Common myeloid progenitor, CD34-positive (primary cell): ENCODE measurements at regions of chr19 and their contacts with region 1.

Region 1: GRCh38 chr19:49570138-49570856 is 10.1 kb downstream of the NOSIP start:
- DNase-seq: peak; percentile 90 to 96 (median 91)
- H3K4me3 ChIP-seq: no peak overlapping the region
- H3K27ac ChIP-seq: no peak overlapping the region
- H3K4me1 ChIP-seq: peaks cover 0 to 14% (median 7%) of the 10 kb centered on the region in 4 experiments
- H3K27me3 ChIP-seq: no peaks in the 10 kb centered on the region

Region 2: GRCh38 chr19:49451430-49452181 is 118.7 kb before region 1 on chr19 and contains the start of gene PIH1D1:
- CTCF ChIA-PET with region 1: no interaction called
- POLR2A ChIA-PET with region 1: no interaction called
- DNase-seq: peak; percentile 98 to 99 (median 99)
- H3K4me3 ChIP-seq: peak within 1 kb of the TSS; percentile 71 to 100 (median 89)
- H3K27ac ChIP-seq: peak within 1 kb of the TSS; percentile 96 to 99
- H3K4me1 ChIP-seq: peaks cover 0 to 29% (median 22%) of the 10 kb centered on the region in 4 experiments
- H3K27me3 ChIP-seq: no peaks in the 10 kb centered on the region

Region 3: GRCh38 chr19:49502866-49503581 is 67.3 kb before region 1 on chr19:
- CTCF ChIA-PET with region 1: interaction called, 33 read pairs
- POLR2A ChIA-PET with region 1: no interaction called
- DNase-seq: peak; percentile 65 to 84 (median 76)
- H3K4me3 ChIP-seq: no peak overlapping the region
- H3K27ac ChIP-seq: no peak overlapping the region
- H3K4me1 ChIP-seq: peaks cover 7 to 47% (median 33%) of the 10 kb centered on the region in 4 experiments
- H3K27me3 ChIP-seq: no peaks in the 10 kb centered on the region

Region 4: DNA sequence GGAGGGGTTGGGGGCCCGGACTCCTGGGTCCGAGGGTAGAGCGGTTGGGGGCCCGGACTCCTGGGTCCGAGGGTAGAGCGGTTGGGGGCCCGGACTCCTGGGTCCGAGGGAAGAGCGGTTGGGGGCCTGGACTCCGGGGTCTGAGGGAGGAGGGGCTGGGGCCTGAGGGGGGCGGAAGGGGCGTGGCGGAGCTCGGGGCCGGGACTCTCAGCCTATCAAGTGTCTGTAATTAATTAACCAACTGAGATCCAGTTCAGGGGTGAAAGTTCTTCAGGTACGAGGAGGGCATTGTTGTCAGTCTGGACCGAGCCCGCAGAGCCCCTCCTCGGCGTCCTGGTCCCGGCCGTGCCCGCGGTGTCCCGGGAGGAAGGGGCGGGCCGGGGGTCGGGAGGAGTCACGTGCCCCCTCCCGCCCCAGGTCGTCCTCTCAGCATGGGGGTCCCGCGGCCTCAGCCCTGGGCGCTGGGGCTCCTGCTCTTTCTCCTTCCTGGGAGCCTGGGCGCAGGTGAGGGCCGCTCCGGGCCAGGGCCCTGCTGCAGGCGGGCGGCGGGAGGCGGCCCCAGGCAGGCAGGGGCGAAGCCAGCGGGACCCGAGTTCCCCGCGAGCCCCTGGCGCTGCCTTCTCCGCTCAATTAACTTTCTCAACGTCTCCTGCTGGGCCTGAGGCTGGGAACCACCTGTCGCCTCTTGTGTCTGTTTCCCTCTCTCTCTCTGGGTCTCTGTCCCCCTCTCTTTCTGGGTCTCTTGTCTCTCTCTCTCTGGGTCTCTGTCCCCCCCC is 57.1 kb before region 1 on chr19:
- CTCF ChIA-PET with region 1: interaction called, 26 read pairs
- POLR2A ChIA-PET with region 1: no interaction called
- DNase-seq: peak in 1 of 3 donors; percentile 29
- H3K4me3 ChIP-seq: peak overlapping the region; percentile 38 to 81 (median 63)
- H3K27ac ChIP-seq: no peak overlapping the region
- H3K4me1 ChIP-seq: peaks cover 0 to 62% (median 39%) of the 10 kb centered on the region in 4 experiments
- H3K27me3 ChIP-seq: peaks cover 0 to 2% (median 0%) of the 10 kb centered on the region in 5 experiments

Region 5: GRCh38 chr19:49533551-49534488 is 36.5 kb before region 1 on chr19:
- CTCF ChIA-PET with region 1: no interaction called
- POLR2A ChIA-PET with region 1: no interaction called
- DNase-seq: peak; percentile 59 to 75 (median 66)
- H3K4me3 ChIP-seq: peak overlapping the region; percentile 15 to 71 (median 60)
- H3K27ac ChIP-seq: no peak overlapping the region
- H3K4me1 ChIP-seq: peaks cover 5 to 42% (median 41%) of the 10 kb centered on the region in 4 experiments
- H3K27me3 ChIP-seq: peaks cover 0 to 28% (median 5%) of the 10 kb centered on the region in 5 experiments

Region 6: GRCh38 chr19:49546825-49547565 is 23.3 kb before region 1 on chr19:
- CTCF ChIA-PET with region 1: interaction called, 69 read pairs
- POLR2A ChIA-PET with region 1: no interaction called
- DNase-seq: peak; percentile 80 to 89 (median 85)
- H3K4me3 ChIP-seq: no peak overlapping the region
- H3K27ac ChIP-seq: no peak overlapping the region
- H3K4me1 ChIP-seq: peaks cover 0 to 8% (median 2%) of the 10 kb centered on the region in 4 experiments
- H3K27me3 ChIP-seq: no peaks in the 10 kb centered on the region

Region 7: DNA sequence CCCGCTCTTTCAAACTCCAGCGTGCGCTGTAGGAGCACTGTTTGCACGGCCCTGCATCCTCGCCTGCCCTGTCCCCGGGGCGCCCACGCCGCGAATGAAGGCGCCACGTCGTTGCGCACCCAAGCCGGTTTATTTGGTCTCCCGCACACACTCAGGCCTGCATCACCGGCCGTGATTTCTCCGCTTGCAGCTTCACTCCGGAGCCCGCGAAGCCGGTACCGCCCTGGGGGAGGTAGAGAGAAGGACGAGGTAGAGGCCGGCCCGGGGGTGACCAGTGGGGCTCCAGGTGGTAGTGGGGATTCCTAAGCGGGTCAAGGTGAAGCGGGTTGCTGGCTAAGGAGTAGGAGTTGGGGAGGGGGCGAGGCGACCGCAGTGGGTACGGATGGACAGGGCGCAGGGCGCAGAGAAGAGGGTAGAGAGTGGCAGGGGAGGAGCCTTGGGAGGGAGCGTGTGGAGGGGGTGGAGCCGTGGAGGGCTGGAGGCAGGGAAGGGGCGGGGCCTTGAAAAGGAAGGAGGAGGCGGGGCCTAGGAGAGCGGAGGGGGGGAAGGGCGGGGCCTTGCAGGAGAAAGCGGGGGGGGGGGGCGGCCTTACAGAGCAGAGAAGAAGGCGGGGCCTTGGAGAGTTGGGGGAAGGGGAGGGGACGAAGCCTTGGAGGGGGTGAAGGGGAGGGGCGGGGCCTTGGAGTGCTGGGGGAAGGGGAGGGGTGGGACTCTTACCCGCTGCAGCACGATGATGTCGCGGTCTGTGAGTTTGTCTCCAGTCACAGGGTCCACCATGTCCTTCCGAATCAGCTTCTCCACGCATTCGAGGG is 14.5 kb before region 1 on chr19:
- CTCF ChIA-PET with region 1: interaction called, 70 read pairs
- POLR2A ChIA-PET with region 1: interaction called, 5 read pairs
- DNase-seq: peak; percentile 70 to 80 (median 72)
- H3K4me3 ChIP-seq: no peak overlapping the region
- H3K27ac ChIP-seq: no peak overlapping the region
- H3K4me1 ChIP-seq: peaks cover 0 to 24% (median 18%) of the 10 kb centered on the region in 4 experiments
- H3K27me3 ChIP-seq: no peaks in the 10 kb centered on the region

Region 8: DNA sequence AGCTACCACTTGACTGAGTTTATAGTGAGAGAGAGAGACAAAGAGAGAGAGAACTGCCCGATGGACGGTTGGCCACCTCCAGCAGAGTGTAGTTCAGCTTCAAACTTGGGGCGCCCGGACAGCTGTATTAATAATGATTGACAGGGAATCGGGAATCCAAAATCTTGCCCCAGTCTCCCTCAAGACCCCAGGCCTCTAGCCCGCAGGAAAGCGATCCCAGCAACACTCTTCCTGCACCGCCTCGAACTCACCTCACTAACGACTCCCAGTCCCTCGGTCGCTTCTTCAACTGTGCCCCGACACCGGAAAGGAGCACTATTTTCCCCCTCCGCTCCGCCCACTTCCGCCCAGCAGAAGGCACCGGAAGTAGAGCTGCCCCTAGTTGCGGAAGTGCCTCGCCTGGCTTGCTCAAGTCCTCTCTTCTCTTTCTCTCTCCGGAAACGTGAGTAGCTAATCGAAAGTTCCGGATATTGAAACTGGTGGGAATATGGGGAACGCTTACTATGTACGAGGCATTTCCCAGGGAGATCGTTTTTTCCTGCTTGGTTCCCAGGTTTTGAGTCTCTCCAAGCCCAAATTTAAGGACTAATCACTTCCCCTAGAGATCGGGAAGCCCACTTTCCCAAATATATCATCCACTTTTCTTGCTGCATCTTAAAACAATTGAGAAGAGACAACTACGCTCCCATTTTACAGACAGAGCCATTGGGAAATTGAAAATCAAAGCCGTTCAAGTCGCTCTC is 10.1 kb after region 1 on chr19 and contains the start of gene NOSIP:
- CTCF ChIA-PET with region 1: interaction called, 27 read pairs
- POLR2A ChIA-PET with region 1: interaction called, 3 read pairs
- DNase-seq: peak; percentile 97
- H3K4me3 ChIP-seq: peak within 1 kb of the TSS; percentile 54 to 98 (median 86)
- H3K27ac ChIP-seq: peak within 1 kb of the TSS; percentile 74 to 86
- H3K4me1 ChIP-seq: peaks cover 9 to 19% (median 15%) of the 10 kb centered on the region in 4 experiments
- H3K27me3 ChIP-seq: no peaks in the 10 kb centered on the region

Region 9: DNA sequence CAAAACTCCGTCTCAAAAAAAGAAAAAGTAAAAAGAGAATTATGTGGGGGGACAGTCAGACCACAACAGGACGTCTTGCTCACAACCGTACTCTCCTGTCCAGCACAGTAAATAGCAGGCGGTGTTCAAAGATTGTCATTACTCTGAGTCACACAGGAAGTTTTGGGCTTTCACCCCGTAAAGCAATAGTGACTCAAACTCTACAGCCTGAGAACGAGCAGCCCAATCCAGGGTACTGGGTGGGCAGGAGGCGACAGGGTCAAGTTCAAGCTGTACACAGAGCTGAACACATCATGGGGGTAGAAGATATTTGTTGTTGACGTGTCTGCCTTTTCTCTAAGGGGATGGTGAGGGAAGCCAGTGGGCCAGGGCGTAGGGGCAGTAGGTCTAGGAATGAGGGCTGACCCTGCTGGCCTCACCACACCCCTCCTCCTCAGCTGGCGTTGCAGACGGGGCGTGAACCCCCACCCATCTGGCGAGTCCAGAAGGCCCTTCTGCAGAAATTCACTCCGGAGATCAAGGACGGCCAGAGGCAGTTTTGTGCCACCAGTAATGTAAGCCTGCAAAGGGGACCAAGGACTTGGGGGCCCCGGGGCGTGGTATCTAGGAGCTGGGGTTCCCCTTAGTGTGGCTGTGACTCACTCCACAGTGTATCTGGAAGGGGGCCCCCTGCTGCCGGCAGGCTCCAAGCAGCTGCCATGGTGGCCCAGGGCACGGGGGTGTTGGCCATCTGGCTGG is 44.0 kb after region 1 on chr19:
- CTCF ChIA-PET with region 1: no interaction called
- POLR2A ChIA-PET with region 1: no interaction called
- DNase-seq: peak in 2 of 3 donors; percentile 13 to 19
- H3K4me3 ChIP-seq: no peak overlapping the region
- H3K27ac ChIP-seq: peak overlapping the region in 1 of 2 experiments; percentile 14
- H3K4me1 ChIP-seq: no peaks in the 10 kb centered on the region
- H3K27me3 ChIP-seq: no peaks in the 10 kb centered on the region

Region 10: GRCh38 chr19:49651029-49651825 is 80.9 kb after region 1 on chr19:
- CTCF ChIA-PET with region 1: no interaction called
- POLR2A ChIA-PET with region 1: no interaction called
- DNase-seq: no peak
- H3K4me3 ChIP-seq: no peak overlapping the region
- H3K27ac ChIP-seq: no peak overlapping the region
- H3K4me1 ChIP-seq: no peaks in the 10 kb centered on the region
- H3K27me3 ChIP-seq: no peaks in the 10 kb centered on the region